ENCODE measurements at regions of chr10 and their contacts with region 1.

Region 1: GRCh38 chr10:13439313-13440184 is 89.3 kb downstream of the BEND7 start:
- DNase-seq: no peak
- H3K4me3 ChIP-seq: peak overlapping the region; percentile 40 to 57 (median 46)
- H3K27ac ChIP-seq: no peak overlapping the region
- H3K4me1 ChIP-seq: peaks cover 13 to 17% (median 16%) of the 10 kb centered on the region in 4 donors
- H3K27me3 ChIP-seq: peaks cover 0 to 39% (median 8%) of the 10 kb centered on the region in 4 donors
- CTCF ChIP-seq: no peak
- EP300 ChIP-seq: no peak
- POLR2A ChIP-seq: no peak

Region 2: DNA sequence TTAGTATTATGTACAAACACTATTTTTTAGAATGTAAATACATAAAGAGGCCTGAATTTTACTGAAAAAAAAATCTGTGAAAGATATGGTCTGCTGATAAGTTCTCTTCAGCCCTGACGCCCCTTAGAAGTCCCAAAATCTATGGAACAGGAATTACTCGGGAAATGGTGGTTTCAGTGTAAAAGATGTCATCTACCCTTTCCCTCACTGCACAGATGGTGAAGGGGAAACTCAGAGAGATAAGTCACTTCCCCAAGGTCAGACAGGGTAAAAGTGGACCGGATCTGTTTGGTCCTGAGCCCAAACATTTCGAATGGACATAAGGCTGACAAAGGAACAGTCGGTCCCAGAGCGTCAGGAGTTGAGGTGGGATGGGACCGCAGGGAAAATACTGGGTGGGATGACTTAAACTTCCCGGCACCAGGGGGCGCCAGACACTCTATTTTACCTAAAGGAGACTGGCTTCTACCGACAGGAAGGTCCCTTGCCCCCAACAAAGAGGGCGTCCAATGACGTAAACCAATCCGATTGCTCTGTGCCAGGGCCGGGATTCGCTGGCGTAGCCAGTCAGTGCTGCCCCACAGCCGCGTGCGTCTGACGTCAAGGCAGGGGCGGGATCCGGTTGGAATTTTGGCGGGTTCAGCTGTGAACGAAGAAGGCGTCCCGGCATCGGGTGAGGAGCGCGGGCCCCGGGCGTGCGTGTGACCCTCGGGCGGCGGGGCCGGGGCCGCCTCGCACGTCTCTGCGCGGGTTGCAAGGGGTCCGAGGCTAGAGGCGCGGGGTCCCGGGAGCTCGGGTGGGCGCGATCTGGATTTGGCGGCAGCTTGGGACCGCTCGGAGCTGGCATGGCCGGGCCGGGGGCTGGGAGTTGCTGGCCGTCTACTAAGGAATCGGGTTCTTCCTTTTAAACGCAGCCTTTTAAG is 278.4 kb before region 1 on chr10 and contains the start of gene MCM10:
- intact Hi-C with region 1: loop called (anchors 5 kb)
- DNase-seq: peak; percentile 99
- H3K4me3 ChIP-seq: peak within 1 kb of the TSS; percentile 47 to 56 (median 50)
- H3K27ac ChIP-seq: peak within 1 kb of the TSS in 2 of 4 donors; percentile 22
- H3K4me1 ChIP-seq: peaks cover 10 to 16% (median 15%) of the 10 kb centered on the region in 4 donors
- H3K27me3 ChIP-seq: no peaks in the 10 kb centered on the region
- CTCF ChIP-seq: peak; percentile 82 to 87 (median 86)
- EP300 ChIP-seq: peak; percentile 39
- POLR2A ChIP-seq: no peak
- total RNA-seq, gene MCM10: 0.17 to 0.32 TPM in 2 of 4 donors, not detected in the others

Region 3: GRCh38 chr10:13180788-13181187 is 258.8 kb before region 1 on chr10:
- intact Hi-C with region 1: no loop called
- DNase-seq: no peak
- H3K4me3 ChIP-seq: no peak overlapping the region
- H3K27ac ChIP-seq: no peak overlapping the region
- H3K4me1 ChIP-seq: no peaks in the 10 kb centered on the region
- H3K27me3 ChIP-seq: no peaks in the 10 kb centered on the region
- CTCF ChIP-seq: no peak
- EP300 ChIP-seq: no peak
- POLR2A ChIP-seq: no peak

Region 4: GRCh38 chr10:13705526-13706174 is 266.1 kb after region 1 on chr10:
- intact Hi-C with region 1: no loop called
- DNase-seq: no peak
- H3K4me3 ChIP-seq: peak overlapping the region in 3 of 4 donors; percentile 55 to 60 (median 60)
- H3K27ac ChIP-seq: peak overlapping the region in 1 of 4 donors; percentile 65
- H3K4me1 ChIP-seq: peaks cover 44 to 72% (median 61%) of the 10 kb centered on the region in 4 donors
- H3K27me3 ChIP-seq: no peaks in the 10 kb centered on the region
- CTCF ChIP-seq: no peak
- EP300 ChIP-seq: no peak
- POLR2A ChIP-seq: no peak

Measured in esophagus muscularis mucosa (tissue), 4 donors.